Astrocyte of the cerebellum (primary cell): ENCODE measurements at regions of chr13 and their contacts with region 1.

Region 1: DNA sequence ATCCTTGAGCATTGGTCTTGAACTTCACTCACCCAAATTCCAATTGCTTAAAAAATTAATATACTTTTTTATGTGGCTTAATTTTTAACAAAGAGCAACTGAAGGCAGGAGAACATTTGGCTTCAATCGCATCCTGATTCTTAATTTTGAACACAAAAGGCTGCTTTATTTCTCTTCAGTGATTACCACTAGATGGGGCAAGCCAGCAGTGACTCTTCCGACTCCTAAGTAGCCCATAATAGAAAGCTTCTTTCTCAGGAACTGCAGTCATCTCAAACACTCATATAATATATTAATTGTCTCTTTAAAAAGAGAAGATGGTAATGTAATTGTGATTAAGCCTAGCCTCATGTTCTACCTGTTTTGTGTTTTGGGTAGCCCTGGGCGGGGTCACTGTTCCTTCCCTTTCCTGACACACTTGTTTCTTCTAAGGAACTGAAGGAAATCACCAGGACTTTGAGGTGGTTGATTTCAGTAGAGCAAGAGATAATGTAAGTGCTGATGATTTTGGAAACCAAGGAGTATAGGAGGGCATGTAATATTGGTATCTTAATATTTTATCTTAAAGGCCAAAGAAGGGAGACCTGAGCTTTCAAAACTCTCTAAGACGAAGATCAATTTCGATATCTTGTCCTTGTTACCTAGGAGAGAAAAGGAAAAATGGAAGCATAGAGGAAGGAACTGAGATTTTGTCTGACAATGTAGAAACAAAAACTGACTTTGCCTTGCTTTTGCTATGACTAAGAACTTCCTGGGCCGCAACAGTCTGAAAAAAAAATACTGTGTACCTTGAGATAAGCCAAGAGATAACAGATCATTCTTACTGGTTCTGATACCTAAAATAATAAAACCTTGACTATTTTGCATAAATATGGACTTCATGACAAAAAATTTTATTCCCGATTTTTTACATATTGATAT is 73.1 kb downstream of the TNFSF13B start:
- DNase-seq: peak; percentile 45
- H3K4me3 ChIP-seq: no peak overlapping the region
- CTCF ChIP-seq: peak; percentile 80

Region 2: GRCh38 chr13:108508263-108508662 is 165.6 kb after region 1 on chr13:
- in situ Hi-C with region 1: loop called (anchors 25 kb)
- DNase-seq: peak; percentile 42
- H3K4me3 ChIP-seq: no peak overlapping the region
- CTCF ChIP-seq: peak; percentile 79